Activated CD8-positive, alpha-beta T cell treated with anti-CD3 and anti-CD28 coated beads, Interleukin-2, amount 10 ng/mL, durations not matched to agents 7 days and 5 days (primary cell): ENCODE measurements at regions of chr10 and their contacts with region 1.

Region 1: GRCh38 chr10:102645741-102646609 is 1.7 kb downstream of the TRIM8 start:
- DNase-seq: peak; percentile 84
- ATAC-seq: peak; percentile 35
- H3K4me3 Mint-ChIP-seq: peak overlapping the region; percentile 99
- H3K27ac Mint-ChIP-seq: peak overlapping the region; percentile 94
- H3K4me1 Mint-ChIP-seq: peaks cover 55% of the 10 kb centered on the region
- H3K27me3 Mint-ChIP-seq: no peaks in the 10 kb centered on the region

Region 2: DNA sequence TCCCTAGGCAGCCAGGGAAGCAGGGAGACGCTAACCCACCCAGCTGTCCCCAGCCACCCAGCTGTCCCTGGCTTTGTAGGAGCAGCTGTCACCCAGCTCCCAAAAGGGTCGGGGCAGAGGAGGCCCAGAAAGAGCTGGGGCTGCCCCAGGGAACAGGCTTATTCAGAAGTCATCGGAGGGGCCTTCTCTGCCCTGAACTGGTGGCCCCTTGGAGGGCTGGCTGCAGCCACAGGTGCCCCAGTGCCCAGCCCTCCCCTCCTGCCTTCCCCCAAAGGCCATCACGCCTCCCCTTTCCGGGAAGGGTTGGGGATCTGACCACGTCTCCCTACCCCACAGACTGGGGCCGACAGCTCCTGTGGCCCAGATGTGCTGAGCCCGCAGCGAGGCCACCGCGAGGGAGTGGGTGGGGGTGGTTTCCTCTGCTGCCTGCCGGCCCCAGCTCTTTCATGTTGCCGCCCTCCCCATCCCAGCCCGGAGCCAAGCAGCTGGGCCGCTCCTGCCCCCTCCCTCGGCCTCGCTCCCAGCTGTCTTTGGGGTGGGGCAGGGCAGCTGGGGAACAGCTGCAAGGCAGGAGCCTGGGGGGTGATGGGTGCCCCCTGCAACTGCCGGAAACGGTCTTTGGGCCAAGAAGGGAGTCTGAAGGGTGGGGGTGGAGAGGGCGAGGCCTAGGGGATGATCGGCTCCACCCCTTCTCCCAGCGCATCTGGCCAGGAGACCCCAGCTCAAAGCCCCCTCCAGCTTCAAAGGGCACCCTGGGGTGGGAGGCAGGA is 15.1 kb after region 1 on chr10:
- CTCF ChIA-PET with region 1: interaction called, 51 read pairs
- POLR2A ChIA-PET with region 1: interaction called, 49 read pairs
- DNase-seq: peak; percentile 86
- ATAC-seq: peak; percentile 91
- H3K4me3 Mint-ChIP-seq: peak overlapping the region; percentile 54
- H3K27ac Mint-ChIP-seq: peak overlapping the region; percentile 91
- H3K4me1 Mint-ChIP-seq: peaks cover 52% of the 10 kb centered on the region
- H3K27me3 Mint-ChIP-seq: no peaks in the 10 kb centered on the region

Region 3: DNA sequence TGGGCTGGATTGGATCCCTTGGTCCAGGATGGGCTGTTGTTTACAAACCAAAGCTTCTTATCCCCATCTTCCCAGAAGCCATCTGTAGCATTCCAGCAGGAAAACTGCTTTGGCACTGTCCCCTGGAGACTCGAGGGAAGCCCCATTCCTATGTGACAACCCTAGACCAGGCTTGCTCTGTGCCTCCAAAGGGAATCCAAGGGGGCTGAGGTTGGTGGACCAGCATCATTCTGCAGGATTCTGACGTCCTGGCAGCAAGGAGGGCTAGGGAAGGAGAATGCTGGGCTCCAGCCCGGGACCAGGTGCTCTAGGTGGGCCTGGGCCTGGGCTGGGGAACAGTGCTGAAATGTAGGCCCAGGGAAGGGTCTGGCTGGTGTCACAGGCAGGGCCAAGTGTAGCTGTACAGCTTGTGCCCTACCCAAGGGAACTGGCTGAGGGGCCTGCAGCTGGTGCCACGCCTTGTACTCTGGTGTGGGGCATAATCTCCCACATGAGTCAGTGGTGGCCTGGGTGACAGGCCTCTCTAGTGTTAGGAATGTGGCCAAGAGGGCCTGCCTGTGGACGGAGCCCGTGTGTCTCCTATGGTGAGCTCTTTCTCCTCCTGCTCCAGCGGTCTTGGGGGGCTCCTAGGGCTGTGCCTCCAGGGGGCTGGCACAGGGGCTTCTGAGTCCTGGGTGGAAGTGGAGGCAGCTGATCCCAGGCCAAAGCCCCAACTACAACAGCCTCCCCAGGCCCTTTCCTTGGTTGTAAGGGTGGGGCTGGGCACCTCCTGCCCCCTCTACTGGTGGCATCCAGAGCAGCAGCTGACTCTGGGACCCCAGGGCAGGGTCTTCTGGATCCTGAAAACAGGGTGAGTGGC is 23.5 kb after region 1 on chr10:
- CTCF ChIA-PET with region 1: interaction called, 40 read pairs
- POLR2A ChIA-PET with region 1: interaction called, 35 read pairs
- DNase-seq: no peak
- ATAC-seq: no peak
- H3K4me3 Mint-ChIP-seq: no peak overlapping the region
- H3K27ac Mint-ChIP-seq: peak overlapping the region; percentile 55
- H3K4me1 Mint-ChIP-seq: peaks cover 40% of the 10 kb centered on the region
- H3K27me3 Mint-ChIP-seq: no peaks in the 10 kb centered on the region

Region 4: GRCh38 chr10:102678842-102679289 is 32.9 kb after region 1 on chr10:
- CTCF ChIA-PET with region 1: interaction called, 27 read pairs
- POLR2A ChIA-PET with region 1: interaction called, 24 read pairs
- DNase-seq: no peak
- ATAC-seq: no peak
- H3K4me3 Mint-ChIP-seq: no peak overlapping the region
- H3K27ac Mint-ChIP-seq: no peak overlapping the region
- H3K4me1 Mint-ChIP-seq: peaks cover 48% of the 10 kb centered on the region
- H3K27me3 Mint-ChIP-seq: no peaks in the 10 kb centered on the region

Region 5: DNA sequence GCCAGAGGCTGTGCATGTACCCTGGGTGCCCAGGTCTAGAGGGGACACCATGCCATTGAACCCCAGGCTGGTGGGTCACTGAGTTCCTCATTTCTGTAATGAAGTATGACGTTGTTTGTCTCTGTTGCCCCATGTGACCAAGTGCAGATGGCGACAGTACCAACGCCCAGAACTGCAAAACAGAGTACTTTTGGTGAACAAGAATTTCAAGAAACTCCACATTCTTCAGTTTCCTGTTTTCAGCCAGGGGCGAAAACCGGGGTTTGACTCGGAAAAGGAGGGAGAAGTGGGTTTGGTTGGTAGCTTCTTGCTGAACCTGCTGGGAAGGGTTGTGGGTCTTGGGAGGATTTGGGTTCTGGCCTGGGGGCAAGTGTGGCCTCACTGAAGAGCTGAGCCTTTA is 173.1 kb after region 1 on chr10:
- CTCF ChIA-PET with region 1: no interaction called
- POLR2A ChIA-PET with region 1: no interaction called
- DNase-seq: no peak
- ATAC-seq: no peak
- H3K4me3 Mint-ChIP-seq: no peak overlapping the region
- H3K27ac Mint-ChIP-seq: no peak overlapping the region
- H3K4me1 Mint-ChIP-seq: peaks cover 8% of the 10 kb centered on the region
- H3K27me3 Mint-ChIP-seq: no peaks in the 10 kb centered on the region